ENCODE measurements at regions of chr11 and their contacts with region 1.

Region 1: GRCh38 chr11:13343931-13344717 is 66.5 kb downstream of the BMAL1 start:
- DNase-seq: peak; percentile 26
- ATAC-seq: peak; percentile 63
- H3K4me3 Mint-ChIP-seq: no peak overlapping the region
- H3K27ac Mint-ChIP-seq: no peak overlapping the region
- H3K4me1 Mint-ChIP-seq: peaks cover 47% of the 10 kb centered on the region
- H3K27me3 Mint-ChIP-seq: no peaks in the 10 kb centered on the region
- CTCF ChIP-seq: peak; percentile 49

Region 2: DNA sequence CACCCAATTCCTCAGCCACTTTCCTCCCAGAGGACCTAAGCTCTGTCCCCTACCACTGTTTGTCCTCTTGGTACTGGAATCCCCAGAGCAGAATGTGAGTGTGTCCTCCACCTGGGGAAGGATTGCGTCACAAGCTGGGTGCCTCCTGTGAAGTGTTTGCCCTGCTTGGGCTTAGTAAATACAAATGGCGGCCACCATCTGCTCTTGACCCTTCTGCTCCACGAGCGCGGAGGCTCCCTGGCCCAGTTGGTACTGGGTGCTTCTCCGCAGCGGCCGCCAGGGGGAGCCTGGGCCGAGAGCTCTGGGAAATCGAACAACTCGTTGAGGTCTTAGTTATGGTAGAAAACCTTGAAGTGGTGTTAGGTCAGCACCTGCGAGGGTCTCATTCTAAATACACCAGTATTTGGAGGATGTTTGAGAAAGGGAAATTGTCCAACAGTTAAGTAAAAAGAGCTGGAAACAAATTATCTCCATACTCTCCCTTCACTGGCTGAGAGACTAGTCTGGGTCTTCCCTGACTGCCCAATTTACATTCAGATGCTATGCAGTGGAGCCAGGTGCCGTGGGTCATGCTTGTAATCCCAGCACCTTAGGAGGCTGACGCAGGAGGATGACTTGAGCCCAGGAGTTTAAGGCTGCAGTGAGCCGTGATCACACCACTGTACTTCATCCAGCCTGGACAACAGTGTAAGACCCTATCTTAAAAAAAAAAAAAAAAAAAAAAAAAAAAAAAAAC is 744.5 kb before region 1 on chr11:
- CTCF ChIA-PET with region 1: interaction called, 3 read pairs
- POLR2A ChIA-PET with region 1: no interaction called
- intact Hi-C with region 1: loop called (anchors 5 kb)
- DNase-seq: no peak
- ATAC-seq: no peak
- H3K4me3 Mint-ChIP-seq: no peak overlapping the region
- H3K27ac Mint-ChIP-seq: no peak overlapping the region
- H3K4me1 Mint-ChIP-seq: no peaks in the 10 kb centered on the region
- H3K27me3 Mint-ChIP-seq: no peaks in the 10 kb centered on the region
- CTCF ChIP-seq: peak; percentile 43

Region 3: DNA sequence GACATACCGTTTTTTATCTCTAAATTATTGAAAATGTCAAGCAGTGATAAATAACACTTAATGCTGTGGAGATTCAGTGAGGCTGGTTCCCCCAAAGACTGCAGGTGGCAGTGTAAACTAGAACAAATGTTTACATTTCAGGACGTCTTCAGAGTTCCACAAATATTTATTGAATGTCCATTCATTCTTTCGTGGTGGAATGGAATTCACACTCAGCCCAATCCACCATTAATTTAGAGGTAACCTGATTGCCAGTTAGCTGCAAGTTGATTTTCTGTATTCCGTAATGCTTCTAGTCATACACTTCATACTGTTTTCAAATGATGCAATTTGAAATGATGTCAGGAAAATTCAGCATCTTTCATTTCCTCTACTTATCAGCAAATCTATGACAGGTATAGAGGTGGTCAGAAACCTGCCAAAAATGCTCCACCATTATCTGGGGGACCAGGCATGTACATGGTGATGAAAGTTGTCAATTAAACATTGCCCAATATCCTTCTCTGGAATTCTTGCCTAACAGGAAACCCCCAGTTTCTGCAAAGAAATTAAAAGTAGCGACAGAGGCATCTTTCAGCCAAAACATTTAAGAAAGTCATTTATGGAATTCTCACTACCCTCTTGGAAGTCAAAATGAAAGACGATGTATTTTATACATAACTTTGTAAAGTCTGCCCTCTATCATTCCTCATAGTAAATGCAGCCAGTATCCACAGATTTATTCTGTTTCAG is 160.9 kb before region 1 on chr11:
- CTCF ChIA-PET with region 1: interaction called, 4 read pairs
- POLR2A ChIA-PET with region 1: no interaction called
- intact Hi-C with region 1: loop called (anchors 1 kb)
- DNase-seq: no peak
- ATAC-seq: no peak
- H3K4me3 Mint-ChIP-seq: no peak overlapping the region
- H3K27ac Mint-ChIP-seq: no peak overlapping the region
- H3K4me1 Mint-ChIP-seq: no peaks in the 10 kb centered on the region
- H3K27me3 Mint-ChIP-seq: peaks cover 4% of the 10 kb centered on the region
- CTCF ChIP-seq: no peak

Region 4: GRCh38 chr11:13210424-13210823 is 133.7 kb before region 1 on chr11:
- CTCF ChIA-PET with region 1: interaction called, 9 read pairs
- POLR2A ChIA-PET with region 1: no interaction called
- intact Hi-C with region 1: loop called (anchors 1 kb)
- DNase-seq: no peak
- ATAC-seq: no peak
- H3K4me3 Mint-ChIP-seq: no peak overlapping the region
- H3K27ac Mint-ChIP-seq: no peak overlapping the region
- H3K4me1 Mint-ChIP-seq: peaks cover 12% of the 10 kb centered on the region
- H3K27me3 Mint-ChIP-seq: peaks cover 20% of the 10 kb centered on the region
- CTCF ChIP-seq: no peak

Region 5: DNA sequence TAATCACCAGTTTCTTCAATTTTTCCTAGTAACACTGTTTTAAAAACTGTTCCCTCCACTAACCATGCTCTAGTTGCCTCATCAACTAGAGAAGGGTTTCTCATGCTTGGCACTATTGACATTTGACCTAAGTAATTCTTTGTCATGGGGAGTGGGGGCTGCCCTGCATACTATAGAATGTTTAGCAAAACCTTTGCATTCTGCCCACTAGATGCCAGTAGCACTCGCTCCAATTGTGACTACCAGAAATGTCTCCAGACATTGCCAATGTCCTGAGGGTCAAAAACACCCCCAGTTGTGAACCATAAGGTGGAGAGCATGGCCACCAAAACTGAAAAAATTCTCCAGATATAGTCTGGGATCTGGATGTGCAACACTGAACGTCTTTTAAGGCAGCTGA is 94.1 kb before region 1 on chr11:
- CTCF ChIA-PET with region 1: interaction called, 3 read pairs
- POLR2A ChIA-PET with region 1: no interaction called
- intact Hi-C with region 1: loop called (anchors 5 kb)
- DNase-seq: no peak
- ATAC-seq: no peak
- H3K4me3 Mint-ChIP-seq: no peak overlapping the region
- H3K27ac Mint-ChIP-seq: no peak overlapping the region
- H3K4me1 Mint-ChIP-seq: no peaks in the 10 kb centered on the region
- H3K27me3 Mint-ChIP-seq: peaks cover 18% of the 10 kb centered on the region
- CTCF ChIP-seq: no peak

Region 6: DNA sequence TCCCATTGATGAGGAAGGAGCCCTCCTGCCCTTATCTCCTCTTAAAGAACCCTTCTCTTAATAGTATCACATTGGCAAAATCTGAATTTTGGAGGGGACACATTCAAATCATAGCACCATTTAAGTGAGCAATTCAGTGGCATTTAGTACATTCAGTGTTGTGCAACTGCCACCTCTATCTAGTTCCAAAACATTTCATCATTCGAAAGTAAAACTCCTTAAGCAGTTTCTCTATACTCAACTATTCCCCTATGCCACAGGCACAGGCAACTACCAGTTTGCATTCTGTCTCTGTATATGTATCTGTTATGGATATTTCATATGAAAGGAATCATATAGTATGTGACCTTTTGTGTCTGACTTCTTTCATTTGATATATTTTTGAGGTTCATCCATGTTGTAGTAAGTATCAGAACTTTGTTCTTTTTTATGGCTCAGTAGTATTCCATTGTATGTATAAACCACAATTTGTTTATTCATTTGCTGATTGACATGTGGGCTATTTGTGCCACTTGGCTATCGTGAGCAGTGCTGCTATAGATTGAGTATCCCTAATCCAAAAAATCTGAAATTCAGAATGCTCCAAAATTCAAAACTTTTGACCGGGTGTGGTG is 347.3 kb after region 1 on chr11:
- CTCF ChIA-PET with region 1: no interaction called
- POLR2A ChIA-PET with region 1: no interaction called
- intact Hi-C with region 1: no loop called
- DNase-seq: no peak
- ATAC-seq: no peak
- H3K4me3 Mint-ChIP-seq: no peak overlapping the region
- H3K27ac Mint-ChIP-seq: no peak overlapping the region
- H3K4me1 Mint-ChIP-seq: peaks cover 5% of the 10 kb centered on the region
- H3K27me3 Mint-ChIP-seq: no peaks in the 10 kb centered on the region
- CTCF ChIP-seq: no peak

Measured in activated B cell treated with CpG ODN at 0.5 μM for 24 hours (primary cell).